PC-3 (cell line): ENCODE measurements at regions of chr12 and their contacts with region 1.

Region 1: DNA sequence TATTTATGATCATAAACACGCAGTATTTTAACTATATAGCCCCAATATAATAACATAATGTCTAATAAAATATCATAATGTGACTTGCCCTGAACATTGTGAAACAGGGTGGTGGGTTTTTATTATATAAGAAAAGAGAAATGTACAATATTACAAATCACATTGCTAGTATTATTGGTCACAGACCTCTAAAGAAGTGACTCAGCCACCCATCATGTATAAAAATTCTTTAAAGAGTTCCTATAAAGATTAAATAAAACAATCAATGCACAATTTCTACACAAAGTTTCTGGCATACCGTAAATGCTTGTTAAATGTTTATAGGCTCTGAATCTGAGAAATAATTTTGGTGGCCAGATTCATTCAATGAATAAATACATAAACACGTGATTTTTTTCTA is 28.9 kb downstream of the ABCC9 start:
- DNase-seq: peak; percentile 88
- ATAC-seq: peak; percentile 82
- H3K4me3 ChIP-seq: no peak overlapping the region
- H3K27ac ChIP-seq: peak overlapping the region; percentile 64
- H3K4me1 ChIP-seq: peaks cover 23% of the 10 kb centered on the region
- H3K27me3 ChIP-seq: no peaks in the 10 kb centered on the region
- CTCF ChIP-seq: no peak

Region 2: DNA sequence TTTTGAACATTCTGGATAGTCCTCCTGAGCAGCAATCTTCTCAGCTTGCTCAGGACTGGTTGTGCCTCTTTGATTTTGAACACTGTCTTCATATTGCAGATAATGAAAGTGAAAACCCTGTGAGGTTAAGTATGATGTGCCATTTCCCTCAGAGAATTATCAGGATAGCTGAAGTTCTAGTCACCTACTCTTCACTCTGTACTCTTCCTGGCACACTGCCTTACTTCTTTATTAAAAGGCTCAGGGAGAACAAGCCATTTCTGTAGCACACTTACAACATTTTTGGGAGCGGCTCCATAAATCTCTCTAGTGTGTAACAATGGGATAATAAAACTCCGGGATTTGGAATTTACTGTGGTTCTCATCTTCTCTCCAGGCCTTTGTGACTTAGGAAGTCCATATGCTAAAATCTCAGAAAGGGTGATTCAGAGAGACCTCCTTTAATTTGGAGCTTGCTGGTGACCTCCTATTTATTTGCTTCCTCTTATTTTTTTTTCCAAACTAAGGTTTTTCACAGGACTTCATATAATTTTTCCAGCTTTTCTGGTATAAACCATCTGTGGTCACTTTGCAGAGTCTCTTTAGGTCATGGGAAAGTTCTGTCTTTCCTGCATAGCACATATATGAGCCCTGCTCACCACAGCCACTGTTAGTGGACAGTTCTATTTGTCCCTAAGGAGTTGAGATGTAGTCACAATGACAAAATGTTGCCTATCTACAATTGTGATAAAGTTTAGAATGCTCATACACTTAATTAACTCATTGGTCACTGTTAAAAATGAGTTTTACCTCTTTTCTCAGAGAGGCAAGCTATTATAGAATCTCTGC is 201.2 kb before region 1 on chr12:
- CTCF ChIA-PET with region 1: no interaction called
- POLR2A ChIA-PET with region 1: no interaction called
- intact Hi-C with region 1: loop called (anchors 1 kb)
- DNase-seq: peak; percentile 19
- ATAC-seq: peak; percentile 68
- H3K4me3 ChIP-seq: no peak overlapping the region
- H3K27ac ChIP-seq: no peak overlapping the region
- H3K4me1 ChIP-seq: peaks cover 14% of the 10 kb centered on the region
- H3K27me3 ChIP-seq: no peaks in the 10 kb centered on the region
- CTCF ChIP-seq: no peak

Region 3: GRCh38 chr12:21989819-21990412 is 77.6 kb after region 1 on chr12:
- CTCF ChIA-PET with region 1: no interaction called
- POLR2A ChIA-PET with region 1: no interaction called
- intact Hi-C with region 1: loop called (anchors 10 kb)
- DNase-seq: peak; percentile 61
- ATAC-seq: peak; percentile 46
- H3K4me3 ChIP-seq: no peak overlapping the region
- H3K27ac ChIP-seq: no peak overlapping the region
- H3K4me1 ChIP-seq: peaks cover 4% of the 10 kb centered on the region; the same call in 1 of the 2 replicates
- H3K27me3 ChIP-seq: no peaks in the 10 kb centered on the region
- CTCF ChIP-seq: peak; percentile 71